Activated T-helper 1 cell treated with anti-CD3 and anti-CD28 coated beads, Interleukin-12 subunit alpha, Interleukin-12 subunit beta, Interleukin-2, Interleukin-4 antibody, amounts not matched to agents 30 ng/mL and 10 ng/mL and 1 ng/mL, durations not matched to agents 14 hours and 24 hours and 36 hours (primary cell): ENCODE measurements at regions of chr1 and their contacts with region 1.

Region 1: GRCh38 chr1:224052772-224053171 is 61.1 kb upstream of the FBXO28 start:
- DNase-seq: no peak
- H3K4me3 Mint-ChIP-seq: no peak overlapping the region
- H3K27ac Mint-ChIP-seq: no peak overlapping the region
- H3K4me1 Mint-ChIP-seq: no peaks in the 10 kb centered on the region
- H3K27me3 Mint-ChIP-seq: peaks cover 2% of the 10 kb centered on the region

Region 2: DNA sequence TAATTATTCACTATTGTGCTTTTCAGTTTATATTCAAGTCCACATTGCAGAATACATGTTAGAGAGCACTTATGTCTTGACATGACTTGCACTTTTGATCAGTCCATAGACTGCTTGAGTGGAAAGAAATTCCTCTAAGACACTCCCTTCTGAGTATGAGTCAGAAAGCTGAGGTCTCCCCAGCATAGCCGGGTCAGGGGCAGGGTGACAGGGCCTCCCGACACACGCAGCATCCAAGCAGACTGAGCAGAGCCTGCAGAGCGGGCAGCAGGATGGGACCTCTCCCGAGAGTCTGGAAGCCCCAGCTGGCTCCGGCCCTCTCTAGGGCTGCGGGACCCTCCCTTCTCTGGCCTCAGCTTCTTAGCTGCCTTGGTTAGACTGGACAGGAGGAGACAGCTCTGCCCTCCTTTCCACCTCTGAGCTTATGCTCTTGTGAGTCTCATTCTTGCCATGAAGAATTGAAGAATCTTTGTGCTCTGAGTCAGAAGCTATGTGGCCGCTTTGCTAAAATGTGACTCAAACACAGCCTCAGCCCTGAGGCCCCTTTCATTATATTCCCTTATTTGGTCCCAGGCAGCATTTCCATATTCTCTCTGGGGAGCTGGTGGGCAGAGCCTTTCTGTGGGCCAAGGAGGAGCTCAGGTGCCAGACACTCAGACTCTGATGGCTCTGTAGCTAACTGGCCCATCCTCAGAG is 351.7 kb before region 1 on chr1:
- intact Hi-C with region 1: loop called (anchors 1 kb)
- DNase-seq: no peak
- H3K4me3 Mint-ChIP-seq: no peak overlapping the region
- H3K27ac Mint-ChIP-seq: peak overlapping the region; percentile 83
- H3K4me1 Mint-ChIP-seq: peaks cover 54% of the 10 kb centered on the region
- H3K27me3 Mint-ChIP-seq: peaks cover 4% of the 10 kb centered on the region

Region 3: GRCh38 chr1:223748773-223749733 is 303.7 kb before region 1 on chr1:
- intact Hi-C with region 1: no loop called
- DNase-seq: peak; percentile 39
- H3K4me3 Mint-ChIP-seq: peak overlapping the region; percentile 72
- H3K27ac Mint-ChIP-seq: peak overlapping the region; percentile 55
- H3K4me1 Mint-ChIP-seq: peaks cover 20% of the 10 kb centered on the region
- H3K27me3 Mint-ChIP-seq: no peaks in the 10 kb centered on the region

Region 4: GRCh38 chr1:223811634-223812415 is 240.9 kb before region 1 on chr1:
- intact Hi-C with region 1: loop called (anchors 1 kb)
- DNase-seq: no peak
- H3K4me3 Mint-ChIP-seq: no peak overlapping the region
- H3K27ac Mint-ChIP-seq: no peak overlapping the region
- H3K4me1 Mint-ChIP-seq: peaks cover 14% of the 10 kb centered on the region
- H3K27me3 Mint-ChIP-seq: no peaks in the 10 kb centered on the region

Region 5: GRCh38 chr1:224067621-224068457 is 15.1 kb after region 1 on chr1:
- intact Hi-C with region 1: loop called (anchors 1 kb)
- DNase-seq: no peak
- H3K4me3 Mint-ChIP-seq: no peak overlapping the region
- H3K27ac Mint-ChIP-seq: no peak overlapping the region
- H3K4me1 Mint-ChIP-seq: peaks cover 4% of the 10 kb centered on the region
- H3K27me3 Mint-ChIP-seq: peaks cover 9% of the 10 kb centered on the region

Region 6: GRCh38 chr1:224245188-224245587 is 192.4 kb after region 1 on chr1:
- intact Hi-C with region 1: no loop called
- DNase-seq: no peak
- H3K4me3 Mint-ChIP-seq: no peak overlapping the region
- H3K27ac Mint-ChIP-seq: peak overlapping the region; percentile 81
- H3K4me1 Mint-ChIP-seq: peaks cover 28% of the 10 kb centered on the region
- H3K27me3 Mint-ChIP-seq: no peaks in the 10 kb centered on the region